AG04449 (cell line): ENCODE measurements at regions of chr10 and their contacts with region 1.

Region 1: DNA sequence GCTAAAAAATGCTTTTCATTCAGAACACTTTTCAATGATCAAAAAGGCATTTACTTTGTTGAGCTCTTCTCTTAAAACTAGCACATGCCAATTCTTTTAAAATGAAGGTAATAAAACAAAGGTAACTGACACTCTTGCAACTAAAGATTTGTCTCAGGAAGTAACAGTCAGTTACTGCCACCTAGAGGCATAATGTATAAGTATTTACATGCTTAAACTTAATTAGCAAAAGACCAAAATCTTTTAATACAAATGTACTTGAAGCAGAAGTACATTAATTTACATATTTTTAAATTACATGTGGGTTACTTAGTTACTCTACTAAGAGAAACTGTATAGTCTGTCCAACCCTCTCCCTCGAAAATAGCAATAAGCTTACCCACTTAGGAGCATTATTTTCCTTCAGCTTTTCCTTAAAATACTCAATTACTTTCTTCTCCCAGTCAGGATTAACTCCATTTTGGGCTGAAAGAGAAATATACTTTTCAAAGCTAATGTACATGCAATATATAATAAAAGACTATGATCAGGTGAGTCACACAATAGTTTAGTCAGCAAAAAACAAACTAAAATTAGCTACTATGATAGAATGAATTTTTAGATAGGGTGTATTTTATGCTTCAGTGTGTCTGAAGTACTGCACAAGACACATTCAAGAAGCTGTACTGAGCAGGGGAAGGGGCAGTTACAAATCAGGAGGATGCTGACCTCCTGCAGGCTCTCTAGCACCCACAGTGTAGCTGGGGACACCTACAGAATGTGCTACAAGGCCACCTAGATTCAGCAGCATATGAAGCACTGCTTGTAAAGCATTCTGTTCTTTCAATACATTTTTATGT is 13.0 kb downstream of the MCMBP start:
- DNase-seq: no peak
- H3K4me3 ChIP-seq: no peak overlapping the region
- CTCF ChIP-seq: peak; percentile 18

Region 2: DNA sequence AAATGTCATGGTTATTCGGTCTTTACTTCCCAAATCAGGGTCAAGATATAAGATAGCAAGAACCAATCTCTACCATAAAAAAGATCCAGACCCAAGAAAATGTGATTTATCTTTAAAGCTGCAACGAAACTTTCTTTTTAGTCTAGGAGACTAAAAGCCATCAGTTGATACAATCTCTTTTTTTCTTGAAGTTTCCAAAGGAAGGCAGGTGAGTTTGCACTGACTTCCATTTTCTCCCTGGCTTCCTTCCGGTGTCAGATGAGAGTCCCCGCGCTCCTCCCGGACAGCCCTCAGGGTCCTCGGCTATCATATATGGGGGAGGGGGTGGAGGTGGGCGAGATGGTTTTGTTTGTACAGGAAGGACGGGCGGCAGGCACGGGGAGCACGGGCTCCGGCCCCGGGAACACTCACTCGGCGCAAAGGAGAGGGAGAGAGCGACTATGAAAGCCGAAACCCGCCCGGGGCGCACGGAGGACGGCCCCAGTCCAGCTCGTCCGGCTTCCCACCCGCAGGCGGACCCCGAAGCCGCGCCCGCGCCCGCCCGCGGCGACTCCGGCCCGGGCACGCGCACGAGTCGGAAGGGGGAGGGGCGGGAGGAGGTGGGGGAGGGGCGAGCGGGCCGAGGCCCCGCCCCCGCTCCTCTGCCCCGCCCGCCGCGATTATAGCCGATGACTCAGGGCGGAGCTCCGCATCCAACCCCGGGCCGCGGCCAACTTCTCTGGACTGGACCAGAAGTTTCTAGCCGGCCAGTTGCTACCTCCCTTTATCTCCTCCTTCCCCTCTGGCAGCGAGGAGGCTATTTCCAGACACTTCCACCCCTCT is 208.7 kb before region 1 on chr10 and contains the start of gene BAG3:
- CTCF ChIA-PET with region 1: interaction called, 12 read pairs
- POLR2A ChIA-PET with region 1: interaction called, 4 read pairs
- DNase-seq: peak; percentile 31
- H3K4me3 ChIP-seq: peak within 1 kb of the TSS; percentile 93
- CTCF ChIP-seq: no peak

Region 3: GRCh38 chr10:119715628-119716505 is 143.8 kb before region 1 on chr10:
- CTCF ChIA-PET with region 1: interaction called, 12 read pairs
- POLR2A ChIA-PET with region 1: no interaction called
- DNase-seq: no peak
- H3K4me3 ChIP-seq: no peak overlapping the region
- CTCF ChIP-seq: no peak

Region 4: GRCh38 chr10:119742947-119743648 is 116.5 kb before region 1 on chr10:
- CTCF ChIA-PET with region 1: interaction called, 664 read pairs
- POLR2A ChIA-PET with region 1: no interaction called
- DNase-seq: no peak
- H3K4me3 ChIP-seq: no peak overlapping the region
- CTCF ChIP-seq: no peak

Region 5: GRCh38 chr10:119769886-119770285 is 89.8 kb before region 1 on chr10:
- CTCF ChIA-PET with region 1: interaction called, 15 read pairs
- POLR2A ChIA-PET with region 1: no interaction called
- DNase-seq: no peak
- H3K4me3 ChIP-seq: no peak overlapping the region
- CTCF ChIP-seq: no peak

Region 6: GRCh38 chr10:119872860-119873681 is 13.4 kb after region 1 on chr10:
- CTCF ChIA-PET with region 1: interaction called, 96 read pairs
- POLR2A ChIA-PET with region 1: interaction called, 3 read pairs
- DNase-seq: no peak
- H3K4me3 ChIP-seq: peak overlapping the region; percentile 76
- CTCF ChIP-seq: no peak